Left ventricle myocardium inferior (tissue), 1 donor: ENCODE measurements at regions of chr1 and their contacts with region 1.

Region 1: DNA sequence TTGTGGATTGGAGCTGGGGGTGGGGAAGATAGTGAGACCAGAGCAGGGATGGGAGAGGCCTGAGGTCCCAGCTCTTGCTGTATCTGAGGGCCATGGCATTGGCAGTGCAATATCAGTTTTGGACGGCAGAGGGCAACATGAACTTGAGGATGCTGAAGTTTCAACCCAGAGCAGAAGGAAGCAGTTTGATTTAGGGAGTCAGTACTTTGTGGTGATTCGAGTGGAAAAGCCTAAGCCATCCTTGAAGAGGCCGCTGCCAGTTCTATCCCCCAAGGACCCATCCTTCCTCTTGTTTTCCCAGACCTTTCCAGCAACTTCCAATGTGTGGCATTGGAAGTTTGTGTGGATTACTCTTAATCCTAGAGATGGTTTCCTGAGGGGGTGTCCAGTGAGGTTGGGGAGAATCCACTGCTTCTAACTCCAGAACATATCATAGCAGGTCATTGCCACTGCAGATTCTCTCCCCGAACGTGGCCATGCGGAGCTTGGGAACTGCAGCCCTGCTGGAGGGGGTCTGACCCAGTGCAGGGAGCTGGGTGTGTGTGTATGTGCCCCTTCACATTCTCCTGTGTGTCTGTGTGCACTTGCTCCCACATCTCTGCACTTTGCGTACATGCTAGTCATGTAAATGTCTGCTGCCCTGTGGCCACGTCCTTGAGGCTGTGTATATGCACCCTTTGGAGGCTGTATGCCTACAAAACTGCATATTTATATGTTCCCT is 24.1 kb downstream of the SLC26A9 start:
- DNase-seq: peak; percentile 84
- H3K4me3 ChIP-seq: peak overlapping the region; percentile 48
- H3K27ac ChIP-seq: peak overlapping the region; percentile 93
- H3K4me1 ChIP-seq: peaks cover 47% of the 10 kb centered on the region
- H3K27me3 ChIP-seq: no peaks in the 10 kb centered on the region
- CTCF ChIP-seq: peak; percentile 96

Region 2: GRCh38 chr1:205805082-205805712 is 114.0 kb before region 1 on chr1:
- intact Hi-C with region 1: loop called (anchors 10 kb)
- DNase-seq: no peak
- H3K4me3 ChIP-seq: peak overlapping the region; percentile 94
- H3K27ac ChIP-seq: peak overlapping the region; percentile 38
- H3K4me1 ChIP-seq: peaks cover 98% of the 10 kb centered on the region
- H3K27me3 ChIP-seq: no peaks in the 10 kb centered on the region
- CTCF ChIP-seq: no peak

Region 3: DNA sequence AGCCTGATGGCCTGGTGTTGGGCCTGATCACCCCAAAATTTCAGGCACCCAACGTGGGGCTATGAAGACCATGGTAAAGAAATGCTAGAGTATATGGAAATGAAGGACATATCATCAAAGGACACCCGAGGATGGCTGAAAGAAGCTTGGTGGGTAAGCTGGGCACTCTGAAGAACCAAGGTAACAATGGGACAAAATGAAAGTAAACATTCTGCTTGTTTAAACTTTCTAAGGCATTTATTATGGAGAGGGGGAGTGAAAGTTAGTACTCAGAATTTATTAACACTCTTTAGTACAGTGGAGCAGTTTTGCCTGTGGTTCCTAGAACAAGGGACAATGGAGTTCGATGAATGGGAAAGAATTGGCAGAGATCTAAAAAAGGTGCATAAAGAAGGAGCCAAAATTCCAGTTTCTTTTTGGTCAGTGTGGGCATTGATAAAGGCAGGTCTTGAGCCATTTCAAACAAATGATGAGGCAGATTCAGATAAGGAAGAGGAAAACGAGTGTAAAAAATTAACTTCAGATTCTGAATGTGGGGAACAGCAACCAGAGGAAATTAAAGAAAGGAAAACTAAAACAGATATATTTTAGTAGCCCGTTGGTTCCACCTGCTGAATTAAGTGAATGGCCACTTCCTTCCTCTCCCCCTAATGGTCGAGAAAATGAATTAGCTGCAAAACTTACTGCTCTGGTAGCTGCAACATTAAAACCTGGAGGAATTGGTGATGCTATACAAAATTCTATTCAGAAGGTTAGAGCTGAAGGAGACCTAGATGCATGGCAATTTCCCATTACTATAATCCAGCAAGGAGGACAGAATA is 60.8 kb before region 1 on chr1:
- intact Hi-C with region 1: no loop called
- DNase-seq: no peak
- H3K4me3 ChIP-seq: no peak overlapping the region
- H3K27ac ChIP-seq: no peak overlapping the region
- H3K4me1 ChIP-seq: no peaks in the 10 kb centered on the region
- H3K27me3 ChIP-seq: no peaks in the 10 kb centered on the region
- CTCF ChIP-seq: peak; percentile 13